Mammary epithelial cell (primary cell): ENCODE measurements at regions of chr16 and their contacts with region 1.

Region 1: GRCh38 chr16:4957720-4958509 is at the start of gene SEC14L5:
- DNase-seq: peak; percentile 93
- H3K4me3 ChIP-seq: peak within 1 kb of the TSS; percentile 73 to 87 (median 77)
- H3K27ac ChIP-seq: peak within 1 kb of the TSS; percentile 18
- H3K4me1 ChIP-seq: peaks cover 13% of the 10 kb centered on the region
- H3K27me3 ChIP-seq: no peaks in the 10 kb centered on the region
- CTCF ChIP-seq: no peak
- total RNA-seq, gene SEC14L5: under 0.01 TPM in 1 of 2 donors, not detected in the other

Region 2: GRCh38 chr16:4409081-4409932 is 548.6 kb before region 1 on chr16:
- CTCF ChIA-PET with region 1: no interaction called
- dilution Hi-C with region 1: no loop called
- in situ Hi-C with region 1: no loop called
- intact Hi-C with region 1: loop called (anchors 5 kb)
- DNase-seq: peak; percentile 44
- H3K4me3 ChIP-seq: no peak overlapping the region
- H3K27ac ChIP-seq: no peak overlapping the region
- H3K4me1 ChIP-seq: peaks cover 24% of the 10 kb centered on the region
- H3K27me3 ChIP-seq: no peaks in the 10 kb centered on the region
- CTCF ChIP-seq: peak; percentile 36 to 67

Region 3: DNA sequence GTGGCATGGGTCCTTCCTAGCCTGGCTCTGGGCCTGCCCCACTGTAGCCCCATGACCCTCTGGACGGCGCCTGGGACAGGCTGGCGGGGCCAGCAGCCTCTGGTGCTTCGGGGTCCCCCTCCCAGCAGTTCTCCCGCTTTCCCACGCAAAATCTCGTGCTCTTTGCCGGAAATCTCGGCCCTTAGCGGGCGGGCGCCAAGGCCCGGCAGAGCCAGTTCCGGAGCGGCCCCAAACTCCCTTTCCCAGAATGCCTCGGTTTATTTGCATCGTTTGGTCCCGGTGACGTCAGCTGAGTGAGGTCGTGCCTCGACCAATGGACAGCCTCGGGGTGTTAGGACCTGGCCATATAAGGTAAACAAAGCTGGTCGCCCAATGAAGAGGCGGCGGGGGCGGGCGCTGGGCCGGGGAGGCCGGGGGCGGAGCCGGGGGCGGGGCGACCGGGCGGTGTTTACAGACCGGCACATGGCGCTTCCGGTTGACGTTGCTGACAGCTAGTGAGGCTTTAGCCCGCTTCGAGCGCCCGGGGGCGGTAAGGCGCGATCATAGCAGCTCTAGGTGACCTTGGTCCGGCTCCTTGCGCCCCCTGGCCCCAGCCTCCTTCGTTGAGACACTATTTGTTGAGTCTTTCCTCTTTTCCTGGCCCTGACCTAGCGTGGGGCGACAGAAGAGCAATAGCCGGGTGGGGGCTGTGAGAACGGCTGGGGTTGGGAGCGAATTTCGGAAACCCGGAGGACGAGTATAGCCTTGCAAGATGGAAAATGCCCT is 341.7 kb before region 1 on chr16:
- CTCF ChIA-PET with region 1: no interaction called
- dilution Hi-C with region 1: no loop called
- in situ Hi-C with region 1: no loop called
- intact Hi-C with region 1: loop called (anchors 5 kb)
- DNase-seq: peak; percentile 99
- H3K4me3 ChIP-seq: peak overlapping the region; percentile 56 to 68 (median 59)
- H3K27ac ChIP-seq: peak overlapping the region; percentile 52
- H3K4me1 ChIP-seq: peaks cover 53% of the 10 kb centered on the region
- H3K27me3 ChIP-seq: no peaks in the 10 kb centered on the region
- CTCF ChIP-seq: peak in 1 of 2 donors; percentile 31

Region 4: GRCh38 chr16:4734063-4734729 is 223.7 kb before region 1 on chr16 and contains the starts of genes ANKS3 and DNAAF8:
- CTCF ChIA-PET with region 1: no interaction called
- dilution Hi-C with region 1: no loop called
- in situ Hi-C with region 1: no loop called
- intact Hi-C with region 1: loop called (anchors 2 kb)
- DNase-seq: peak; percentile 98
- H3K4me3 ChIP-seq: peak within 1 kb of the TSS; percentile 80 to 98 (median 92)
- H3K27ac ChIP-seq: peak within 1 kb of the TSS; percentile 83
- H3K4me1 ChIP-seq: peaks cover 6% of the 10 kb centered on the region
- H3K27me3 ChIP-seq: no peaks in the 10 kb centered on the region
- CTCF ChIP-seq: no peak
- total RNA-seq, gene ANKS3: 14.5 to 24.3 TPM
- total RNA-seq, gene DNAAF8: 0.17 to 0.71 TPM

Region 5: GRCh38 chr16:4802659-4803287 is 155.1 kb before region 1 on chr16:
- CTCF ChIA-PET with region 1: no interaction called
- dilution Hi-C with region 1: no loop called
- in situ Hi-C with region 1: no loop called
- intact Hi-C with region 1: loop called (anchors 2 kb)
- DNase-seq: peak; percentile 90
- H3K4me3 ChIP-seq: peak overlapping the region; percentile 73 to 80 (median 77)
- H3K27ac ChIP-seq: peak overlapping the region; percentile 53
- H3K4me1 ChIP-seq: peaks cover 26% of the 10 kb centered on the region
- H3K27me3 ChIP-seq: no peaks in the 10 kb centered on the region
- CTCF ChIP-seq: no peak

Region 6: GRCh38 chr16:4882633-4883285 is 75.2 kb before region 1 on chr16:
- CTCF ChIA-PET with region 1: no interaction called
- dilution Hi-C with region 1: no loop called
- in situ Hi-C with region 1: no loop called
- intact Hi-C with region 1: loop called (anchors 1 kb)
- DNase-seq: peak; percentile 93
- H3K4me3 ChIP-seq: no peak overlapping the region
- H3K27ac ChIP-seq: no peak overlapping the region
- H3K4me1 ChIP-seq: peaks cover 14% of the 10 kb centered on the region
- H3K27me3 ChIP-seq: no peaks in the 10 kb centered on the region
- CTCF ChIP-seq: no peak

Region 7: GRCh38 chr16:5033256-5034169 is 75.6 kb after region 1 on chr16 and contains the start of gene NAGPA:
- CTCF ChIA-PET with region 1: no interaction called
- dilution Hi-C with region 1: no loop called
- in situ Hi-C with region 1: no loop called
- intact Hi-C with region 1: loop called (anchors 5 kb)
- DNase-seq: peak; percentile 74
- H3K4me3 ChIP-seq: peak within 1 kb of the TSS; percentile 76 to 96 (median 87)
- H3K27ac ChIP-seq: no peak within 1 kb of the TSS
- H3K4me1 ChIP-seq: peaks cover 4% of the 10 kb centered on the region
- H3K27me3 ChIP-seq: no peaks in the 10 kb centered on the region
- CTCF ChIP-seq: no peak
- total RNA-seq, gene NAGPA: 10.3 to 16.8 TPM